Posterior vena cava (tissue), 2 donors: ENCODE measurements at regions of chr11 and their contacts with region 1.

Region 1: GRCh38 chr11:6152086-6152485 is 18.0 kb downstream of the OR52B2 start:
- DNase-seq: no peak

Region 2: GRCh38 chr11:5107285-5107684 is 1044.8 kb before region 1 on chr11:
- intact Hi-C with region 1: loop called in 1 of 2 experiments (anchors 5 kb)
- DNase-seq: no peak

Region 3: DNA sequence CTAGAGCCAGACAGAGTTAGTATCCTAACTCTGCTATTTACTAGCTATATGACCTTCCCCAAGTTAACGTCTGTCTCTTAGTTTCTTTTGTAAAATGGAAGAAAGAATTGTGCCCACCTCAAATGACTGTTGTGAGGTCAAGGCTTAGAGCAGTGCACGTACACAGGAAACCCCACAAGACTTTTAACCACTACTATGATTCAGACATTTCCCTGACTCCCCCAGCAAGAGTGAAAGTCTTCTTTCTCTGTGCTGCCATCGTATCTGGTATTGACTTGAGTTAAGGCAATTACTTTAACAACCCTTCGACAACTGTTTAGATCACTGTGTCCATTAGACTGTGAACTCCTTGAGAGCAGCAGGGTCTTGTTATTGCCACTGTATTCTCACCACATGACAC is 44.3 kb after region 1 on chr11:
- intact Hi-C with region 1: no loop called
- DNase-seq: no peak